ENCODE measurements at regions of chr3 and their contacts with region 1.

Region 1: DNA sequence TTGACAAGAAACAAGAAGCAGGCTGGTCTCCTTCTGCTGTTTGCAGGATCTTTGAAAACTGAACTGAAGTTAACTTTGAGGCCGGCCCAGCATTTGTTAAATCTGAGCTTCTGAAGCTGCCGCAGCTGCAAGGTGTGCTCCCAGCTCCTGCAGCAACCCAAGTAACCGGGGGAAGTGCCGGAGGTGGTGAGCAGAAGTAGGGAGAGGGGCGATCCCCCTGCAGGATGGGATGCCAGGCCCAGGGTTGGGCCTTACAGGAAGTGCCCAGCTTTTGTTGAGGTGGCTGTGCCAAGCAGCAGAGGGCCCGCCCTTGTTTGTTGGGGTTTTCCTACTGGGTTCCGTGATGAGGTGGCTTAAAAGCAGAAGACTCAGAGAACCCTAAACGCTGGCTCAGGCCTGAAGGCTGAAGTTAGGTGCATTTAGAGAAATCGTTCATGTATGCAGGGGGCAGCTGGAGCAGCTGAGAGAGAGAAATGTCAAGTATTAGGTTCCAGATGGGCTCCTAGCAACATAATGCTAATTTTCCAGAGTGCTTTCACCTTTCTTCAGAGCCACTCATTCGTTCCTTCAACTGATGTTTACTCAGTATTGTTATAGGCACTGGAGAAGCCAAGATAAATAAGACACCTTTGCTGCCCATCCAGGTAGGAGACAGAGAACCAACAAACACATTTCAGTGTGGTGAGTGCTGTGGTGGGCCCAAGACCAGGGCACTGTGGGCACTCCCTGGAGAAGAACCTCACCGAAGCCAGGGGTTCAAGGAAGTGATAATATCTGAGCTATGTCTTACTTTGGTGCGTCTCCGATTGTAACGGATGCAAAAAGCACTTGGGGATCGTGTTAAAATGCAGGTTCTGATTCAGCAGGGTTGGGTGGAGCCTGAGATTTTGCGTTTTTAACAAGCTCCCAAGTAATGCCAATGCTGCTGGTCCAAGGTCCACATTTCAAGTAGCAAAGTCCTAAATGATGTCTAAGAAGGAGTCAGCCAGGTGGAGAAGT is 42.2 kb upstream of the PLCL2 start:
- DNase-seq: peak in 1 of 2 experiments; percentile 3
- H3K4me3 ChIP-seq: no peak overlapping the region
- H3K27ac ChIP-seq: no peak overlapping the region
- H3K4me1 ChIP-seq: no peaks in the 10 kb centered on the region
- H3K27me3 ChIP-seq: no peaks in the 10 kb centered on the region
- CTCF ChIP-seq: no peak

Region 2: GRCh38 chr3:15982667-15983145 is 859.9 kb before region 1 on chr3:
- CTCF ChIA-PET with region 1: no interaction called
- POLR2A ChIA-PET with region 1: no interaction called
- intact Hi-C with region 1: no loop called
- DNase-seq: peak; percentile 69 to 88
- H3K4me3 ChIP-seq: peak overlapping the region; percentile 38; the same call in 1 of the 2 replicates
- H3K27ac ChIP-seq: peak overlapping the region; percentile 89
- H3K4me1 ChIP-seq: peaks cover 27% of the 10 kb centered on the region
- H3K27me3 ChIP-seq: no peaks in the 10 kb centered on the region
- CTCF ChIP-seq: no peak

Region 3: DNA sequence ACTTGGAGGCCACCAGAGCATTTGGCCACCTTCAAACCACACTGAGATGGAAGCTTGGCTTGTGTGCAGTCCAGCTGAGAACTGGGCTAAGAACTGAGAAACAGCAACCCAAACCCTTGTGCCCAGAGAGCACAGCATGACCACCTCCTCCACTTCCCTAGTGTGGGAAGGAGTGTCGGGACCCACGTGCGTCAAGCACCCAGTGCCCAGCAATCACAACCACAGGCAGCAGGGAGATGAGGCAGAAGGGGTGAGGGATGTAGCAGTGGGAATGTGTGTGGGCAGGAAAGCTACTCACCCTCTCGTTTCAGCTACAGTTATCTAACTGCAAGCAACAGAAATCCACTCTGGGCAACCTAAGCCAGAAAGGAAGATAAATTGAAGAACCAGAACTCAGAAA is 304.1 kb before region 1 on chr3:
- CTCF ChIA-PET with region 1: no interaction called
- POLR2A ChIA-PET with region 1: no interaction called
- intact Hi-C with region 1: no loop called
- DNase-seq: no peak
- H3K4me3 ChIP-seq: no peak overlapping the region
- H3K27ac ChIP-seq: no peak overlapping the region
- H3K4me1 ChIP-seq: no peaks in the 10 kb centered on the region
- H3K27me3 ChIP-seq: peaks cover 25% of the 10 kb centered on the region
- CTCF ChIP-seq: no peak

Region 4: GRCh38 chr3:16697443-16698147 is 145.0 kb before region 1 on chr3:
- CTCF ChIA-PET with region 1: no interaction called
- POLR2A ChIA-PET with region 1: interaction called, 10 read pairs
- intact Hi-C with region 1: no loop called
- DNase-seq: no peak
- H3K4me3 ChIP-seq: no peak overlapping the region
- H3K27ac ChIP-seq: no peak overlapping the region; the same call in 1 of the 2 replicates
- H3K4me1 ChIP-seq: peaks cover 18% of the 10 kb centered on the region
- H3K27me3 ChIP-seq: no peaks in the 10 kb centered on the region
- CTCF ChIP-seq: no peak

Region 5: DNA sequence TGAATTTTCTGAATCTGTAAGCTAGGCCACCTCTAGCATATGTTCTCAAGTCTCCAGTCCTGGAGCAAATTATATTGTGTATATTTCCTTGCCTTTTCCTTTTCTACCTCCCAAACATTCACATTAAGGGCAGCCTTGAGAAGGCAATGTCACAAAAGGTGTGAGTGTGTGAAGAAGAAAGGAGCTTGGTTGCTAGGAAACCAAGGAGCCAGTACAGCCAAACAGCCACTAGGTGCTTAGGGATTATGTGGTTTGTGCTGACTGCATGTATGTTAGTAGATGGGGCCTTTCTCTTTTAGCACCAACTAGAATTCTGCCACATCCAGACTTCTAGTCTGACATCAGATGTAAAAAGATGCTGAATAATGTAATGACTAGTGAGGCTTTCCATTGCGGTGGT is 118.6 kb before region 1 on chr3:
- CTCF ChIA-PET with region 1: no interaction called
- POLR2A ChIA-PET with region 1: no interaction called
- intact Hi-C with region 1: no loop called
- DNase-seq: no peak
- H3K4me3 ChIP-seq: no peak overlapping the region
- H3K27ac ChIP-seq: no peak overlapping the region
- H3K4me1 ChIP-seq: peaks cover 20% of the 10 kb centered on the region
- H3K27me3 ChIP-seq: no peaks in the 10 kb centered on the region
- CTCF ChIP-seq: no peak

Measured in PC-9 (cell line).